ENCODE measurements at regions of chr17 and their contacts with region 1.

Region 1: DNA sequence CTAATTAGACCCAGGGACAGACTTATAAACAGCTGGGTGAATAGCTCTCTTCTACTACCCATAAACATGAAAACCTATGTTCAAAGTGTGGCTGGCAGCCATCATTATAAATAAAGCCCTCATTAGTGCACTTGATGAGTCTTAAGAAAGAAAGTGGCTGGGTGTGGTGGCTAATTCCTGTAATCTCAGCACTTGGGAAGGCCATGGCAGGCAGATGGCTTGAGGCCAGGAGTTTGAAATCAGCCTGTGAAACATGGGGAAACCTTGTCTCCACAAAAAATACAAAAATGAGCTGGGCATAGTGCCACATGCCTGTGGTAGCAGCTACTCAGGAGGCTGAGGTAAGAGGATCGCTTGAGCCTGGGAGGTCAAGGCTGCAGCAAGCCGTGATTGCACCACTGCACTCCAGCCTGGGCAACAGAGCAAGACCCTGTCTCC is 28.3 kb upstream of the APPBP2 start:
- DNase-seq: no peak
- ATAC-seq: no peak
- H3K4me3 ChIP-seq: no peak overlapping the region
- H3K27ac ChIP-seq: no peak overlapping the region
- H3K4me1 ChIP-seq: no peaks in the 10 kb centered on the region
- CTCF ChIP-seq: no peak
- EP300 ChIP-seq: no peak
- POLR2A ChIP-seq: no peak
- RAD21 ChIP-seq: no peak

Region 2: GRCh38 chr17:60565233-60565632 is 10.9 kb after region 1 on chr17:
- CTCF ChIA-PET with region 1: interaction called, 19 read pairs
- POLR2A ChIA-PET with region 1: no interaction called
- DNase-seq: no peak
- ATAC-seq: no peak
- H3K4me3 ChIP-seq: no peak overlapping the region
- H3K27ac ChIP-seq: no peak overlapping the region
- H3K4me1 ChIP-seq: 0 out of 3 replicates have a peak, but pooled peaks cover 4% of the 10 kb centered on the region
- CTCF ChIP-seq: no peak
- EP300 ChIP-seq: no peak
- POLR2A ChIP-seq: no peak
- RAD21 ChIP-seq: no peak

Region 3: GRCh38 chr17:60571551-60571950 is 17.2 kb after region 1 on chr17:
- CTCF ChIA-PET with region 1: interaction called, 19 read pairs
- POLR2A ChIA-PET with region 1: no interaction called
- DNase-seq: no peak
- ATAC-seq: 0 out of 6 replicates have a peak, but pooled peaks of 1 of the 2 experiments have one; percentile 49
- H3K4me3 ChIP-seq: no peak overlapping the region
- H3K27ac ChIP-seq: no peak overlapping the region
- H3K4me1 ChIP-seq: no peaks in the 10 kb centered on the region
- CTCF ChIP-seq: no peak
- EP300 ChIP-seq: no peak
- POLR2A ChIP-seq: no peak
- RAD21 ChIP-seq: no peak

Region 4: GRCh38 chr17:60704170-60704569 is 149.8 kb after region 1 on chr17:
- CTCF ChIA-PET with region 1: no interaction called
- POLR2A ChIA-PET with region 1: no interaction called
- DNase-seq: no peak
- ATAC-seq: no peak
- H3K4me3 ChIP-seq: no peak overlapping the region
- H3K27ac ChIP-seq: no peak overlapping the region
- H3K4me1 ChIP-seq: no peaks in the 10 kb centered on the region
- CTCF ChIP-seq: no peak
- EP300 ChIP-seq: no peak
- POLR2A ChIP-seq: no peak
- RAD21 ChIP-seq: no peak